Dorsolateral prefrontal cortex (tissue), 120 donors: ENCODE measurements at regions of chr15 and their contacts with region 1.

Region 1: DNA sequence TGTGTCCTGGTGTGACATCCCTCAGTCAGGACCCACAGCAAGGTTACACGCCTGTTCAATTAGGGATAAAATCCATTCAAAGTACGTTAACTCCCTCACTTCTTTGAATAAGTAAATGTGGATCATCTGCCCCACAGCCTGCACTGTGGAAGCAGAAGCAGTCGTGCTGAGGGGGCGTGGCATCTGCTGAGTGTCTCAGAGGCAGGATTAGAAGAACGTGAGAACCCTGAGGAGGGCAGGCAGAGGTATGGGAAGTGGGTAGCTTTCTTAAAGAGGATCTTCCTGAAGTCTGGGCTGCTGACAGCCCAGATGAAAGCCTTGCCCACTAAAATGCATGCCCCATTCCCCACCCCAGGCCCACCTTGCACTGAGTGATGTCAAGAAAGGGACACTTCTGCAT is 28.5 kb downstream of the CRABP1 start:
- DNase-seq: peak in 1 of 10 donors; percentile 24
- H3K4me3 ChIP-seq: no peak overlapping the region
- H3K27ac ChIP-seq: no peak overlapping the region
- H3K27me3 ChIP-seq: peaks cover 0 to 67% (median 0%) of the 10 kb centered on the region in 45 donors
- CTCF ChIP-seq: no peak

Region 2: DNA sequence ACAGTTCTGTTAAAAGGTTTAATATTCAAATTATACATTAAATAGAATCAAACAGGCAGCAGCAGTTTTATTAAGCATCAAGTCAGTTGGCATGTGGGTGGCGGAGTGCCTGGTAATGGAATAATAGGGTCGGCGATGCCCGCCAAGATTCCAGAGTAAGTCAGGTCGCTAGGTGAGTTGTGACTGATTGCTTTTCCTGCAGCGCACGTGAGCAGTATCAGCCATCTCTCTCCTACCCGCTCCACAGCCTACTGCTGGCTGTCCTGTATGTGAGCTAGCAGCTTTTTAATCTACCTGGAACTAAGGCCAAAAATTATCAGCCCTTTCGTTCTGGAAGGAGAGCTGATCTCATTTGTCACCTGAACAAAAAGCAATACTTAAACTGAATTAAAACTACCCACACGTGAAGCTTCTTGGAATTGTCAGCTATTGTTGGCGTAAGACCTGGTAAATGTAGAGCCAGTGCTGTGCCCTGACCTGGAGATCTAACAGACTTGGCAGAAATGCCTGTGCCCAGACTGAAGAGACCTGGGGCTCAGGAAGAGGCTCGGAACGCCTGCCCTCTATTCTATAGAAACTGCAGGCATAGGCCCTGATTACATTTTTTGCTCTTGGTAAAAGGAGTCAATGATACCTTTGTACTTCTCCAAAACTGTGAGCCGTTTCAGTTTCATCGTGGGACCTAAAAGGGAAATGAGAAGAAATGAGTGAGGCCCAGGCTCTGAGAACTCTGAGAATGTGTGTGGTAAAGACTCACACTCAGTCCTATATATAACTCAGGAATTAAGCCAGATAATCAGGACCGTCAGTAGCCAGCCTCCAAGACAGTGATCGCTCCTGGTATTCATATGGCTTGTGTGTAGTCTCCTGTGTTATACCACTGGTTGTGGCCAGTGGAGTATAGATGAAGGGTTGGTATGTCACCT is 197.5 kb before region 1 on chr15:
- intact Hi-C with region 1: no loop called
- DNase-seq: no peak
- H3K4me3 ChIP-seq: no peak overlapping the region
- H3K27ac ChIP-seq: peak overlapping the region in 3 of 59 donors; percentile 1 to 11 (median 7)
- H3K27me3 ChIP-seq: no peaks in the 10 kb centered on the region
- CTCF ChIP-seq: no peak

Region 3: GRCh38 chr15:78402061-78402610 is 33.5 kb after region 1 on chr15:
- intact Hi-C with region 1: no loop called
- DNase-seq: no peak
- H3K4me3 ChIP-seq: no peak overlapping the region
- H3K27ac ChIP-seq: no peak overlapping the region
- H3K27me3 ChIP-seq: peaks cover 0 to 67% (median 9%) of the 10 kb centered on the region in 45 donors
- CTCF ChIP-seq: no peak

Region 4: GRCh38 chr15:78415286-78415685 is 46.6 kb after region 1 on chr15:
- intact Hi-C with region 1: loop called in 1 of 2 experiments (anchors 5 kb)
- DNase-seq: no peak
- H3K4me3 ChIP-seq: no peak overlapping the region
- H3K27ac ChIP-seq: no peak overlapping the region
- H3K27me3 ChIP-seq: peaks cover 0 to 22% (median 0%) of the 10 kb centered on the region in 45 donors
- CTCF ChIP-seq: peak in 44 of 56 donors; percentile 8 to 58 (median 34)